Activated CD4-positive, alpha-beta T cell treated with anti-CD3 and anti-CD28 coated beads for 36 hours (primary cell): ENCODE measurements at regions of chr17 and their contacts with region 1.

Region 1: DNA sequence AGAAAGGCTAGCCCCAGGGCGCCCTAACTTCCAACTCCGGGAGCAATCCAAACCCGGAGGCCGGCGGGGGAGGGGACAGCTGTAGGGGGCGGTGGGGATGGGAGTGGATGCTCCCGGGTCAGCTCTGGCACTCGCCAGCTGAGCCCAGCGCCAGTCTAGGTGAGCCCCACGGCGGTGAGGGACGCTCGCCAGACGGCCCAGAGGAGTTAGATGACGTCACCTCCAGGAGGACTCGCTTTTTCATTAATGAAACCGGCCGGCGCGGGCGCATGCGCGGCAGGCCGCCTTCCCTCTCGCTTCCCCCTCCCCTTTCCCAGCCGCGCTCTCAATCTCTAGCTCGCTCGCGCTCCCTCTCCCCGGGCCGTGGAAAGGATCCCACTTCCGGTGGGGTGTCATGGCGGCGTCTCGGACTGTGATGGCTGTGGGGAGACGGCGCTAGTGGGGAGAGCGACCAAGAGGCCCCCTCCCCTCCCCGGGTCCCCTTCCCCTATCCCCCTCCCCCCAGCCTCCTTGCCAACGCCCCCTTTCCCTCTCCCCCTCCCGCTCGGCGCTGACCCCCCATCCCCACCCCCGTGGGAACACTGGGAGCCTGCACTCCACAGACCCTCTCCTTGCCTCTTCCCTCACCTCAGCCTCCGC is at the start of gene NF1:
- DNase-seq: peak; percentile 94
- ATAC-seq: peak; percentile 89
- H3K4me3 Mint-ChIP-seq: peak within 1 kb of the TSS; percentile 94
- H3K27ac Mint-ChIP-seq: peak within 1 kb of the TSS; percentile 94
- H3K4me1 Mint-ChIP-seq: peaks cover 11% of the 10 kb centered on the region
- H3K27me3 Mint-ChIP-seq: no peaks in the 10 kb centered on the region
- total RNA-seq, gene NF1: 22.1 to 26.2 TPM

Region 2: DNA sequence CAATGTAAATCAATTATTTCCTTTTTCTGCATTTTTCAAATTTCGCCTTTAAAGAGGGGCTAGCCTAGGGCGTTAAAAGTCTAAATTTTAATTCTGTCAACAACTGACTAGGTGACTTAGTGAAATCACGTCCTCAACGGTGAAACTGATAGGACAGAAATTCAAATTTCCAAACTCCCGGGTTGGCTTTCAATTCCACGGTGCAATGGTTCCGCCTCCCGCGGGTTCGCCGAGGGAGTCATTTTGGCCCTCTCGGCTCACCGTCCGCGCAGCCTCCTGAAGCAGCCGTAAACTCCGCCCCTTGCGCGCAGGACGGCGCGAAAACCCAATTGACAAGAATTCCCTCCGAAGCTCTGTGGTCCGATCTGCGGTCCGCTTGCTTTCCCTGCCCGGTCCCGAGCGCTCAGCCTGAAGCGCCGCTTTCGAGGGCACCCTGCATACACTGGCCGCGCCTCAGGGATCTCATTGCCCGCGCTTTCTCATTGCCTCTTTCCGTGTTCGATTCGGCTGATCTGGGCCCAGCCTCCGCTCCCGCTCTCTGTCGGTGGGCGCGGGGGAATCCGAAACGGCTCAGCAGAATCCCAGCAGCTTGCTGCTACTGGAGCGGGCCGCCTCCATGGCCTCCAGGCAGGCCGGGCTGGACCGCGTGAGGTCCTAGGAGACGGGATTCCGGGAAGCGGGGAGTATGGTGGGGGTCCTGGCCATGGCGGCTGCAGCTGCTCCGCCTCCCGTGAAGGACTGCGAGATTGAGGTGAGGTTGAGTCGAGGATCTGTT is 262.9 kb before region 1 on chr17 and contains the start of gene ATAD5:
- CTCF ChIA-PET with region 1: interaction called, 3 read pairs
- POLR2A ChIA-PET with region 1: no interaction called
- intact Hi-C with region 1: loop called in 1 of 2 experiments (anchors 1 kb)
- DNase-seq: peak; percentile 94
- ATAC-seq: peak; percentile 92
- H3K4me3 Mint-ChIP-seq: peak within 1 kb of the TSS; percentile 99
- H3K27ac Mint-ChIP-seq: peak within 1 kb of the TSS; percentile 94
- H3K4me1 Mint-ChIP-seq: peaks cover 31% of the 10 kb centered on the region
- H3K27me3 Mint-ChIP-seq: no peaks in the 10 kb centered on the region
- total RNA-seq, gene ATAD5: 33.1 to 40.8 TPM

Region 3: DNA sequence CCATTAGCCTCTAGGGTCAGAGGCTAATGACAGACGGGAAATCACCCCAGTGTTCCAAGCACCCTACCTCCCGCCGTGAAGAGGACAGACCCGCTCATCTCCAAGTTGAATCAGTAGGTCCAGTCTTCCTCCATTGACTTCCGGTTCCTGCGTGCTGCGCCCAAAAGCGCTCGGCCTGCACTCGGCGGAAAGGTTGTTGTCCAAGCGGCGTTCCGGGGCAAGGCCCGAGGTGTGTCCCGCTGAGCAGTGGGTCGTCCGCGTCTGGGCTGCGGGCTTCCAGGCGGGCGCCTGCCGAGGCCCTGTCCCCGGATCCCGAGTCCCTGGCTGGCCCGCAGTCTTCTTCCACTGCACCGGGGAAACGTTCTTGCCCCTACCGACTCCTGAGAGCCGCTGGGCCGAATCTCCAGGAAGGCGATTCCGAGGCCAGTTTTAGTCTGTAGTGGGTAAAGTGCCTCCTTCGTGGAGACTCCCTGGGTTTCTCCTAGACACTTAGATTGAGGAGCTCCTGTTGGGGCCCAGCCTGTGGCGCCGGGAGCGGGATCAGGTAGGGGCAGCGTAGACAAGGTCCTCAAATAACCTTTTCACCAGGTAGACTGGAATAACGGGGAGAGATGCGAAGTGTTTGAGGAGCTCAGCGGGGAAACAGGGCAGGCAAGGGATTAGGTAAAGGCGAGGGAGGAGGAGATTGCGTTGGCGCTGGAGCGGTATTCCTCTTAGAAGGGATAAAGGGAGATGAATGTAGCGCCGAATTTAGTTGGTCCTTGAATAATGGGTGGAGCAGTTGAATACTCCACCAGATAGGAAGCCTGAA is 188.4 kb before region 1 on chr17 and contains the start of gene TEFM:
- CTCF ChIA-PET with region 1: interaction called, 4 read pairs
- POLR2A ChIA-PET with region 1: no interaction called
- intact Hi-C with region 1: loop called in 1 of 2 experiments (anchors 1 kb)
- DNase-seq: peak; percentile 93
- ATAC-seq: peak; percentile 97
- H3K4me3 Mint-ChIP-seq: peak within 1 kb of the TSS; percentile 88
- H3K27ac Mint-ChIP-seq: peak within 1 kb of the TSS; percentile 87
- H3K4me1 Mint-ChIP-seq: peaks cover 41% of the 10 kb centered on the region
- H3K27me3 Mint-ChIP-seq: no peaks in the 10 kb centered on the region
- total RNA-seq, gene TEFM: 13.4 to 15.3 TPM

Region 4: DNA sequence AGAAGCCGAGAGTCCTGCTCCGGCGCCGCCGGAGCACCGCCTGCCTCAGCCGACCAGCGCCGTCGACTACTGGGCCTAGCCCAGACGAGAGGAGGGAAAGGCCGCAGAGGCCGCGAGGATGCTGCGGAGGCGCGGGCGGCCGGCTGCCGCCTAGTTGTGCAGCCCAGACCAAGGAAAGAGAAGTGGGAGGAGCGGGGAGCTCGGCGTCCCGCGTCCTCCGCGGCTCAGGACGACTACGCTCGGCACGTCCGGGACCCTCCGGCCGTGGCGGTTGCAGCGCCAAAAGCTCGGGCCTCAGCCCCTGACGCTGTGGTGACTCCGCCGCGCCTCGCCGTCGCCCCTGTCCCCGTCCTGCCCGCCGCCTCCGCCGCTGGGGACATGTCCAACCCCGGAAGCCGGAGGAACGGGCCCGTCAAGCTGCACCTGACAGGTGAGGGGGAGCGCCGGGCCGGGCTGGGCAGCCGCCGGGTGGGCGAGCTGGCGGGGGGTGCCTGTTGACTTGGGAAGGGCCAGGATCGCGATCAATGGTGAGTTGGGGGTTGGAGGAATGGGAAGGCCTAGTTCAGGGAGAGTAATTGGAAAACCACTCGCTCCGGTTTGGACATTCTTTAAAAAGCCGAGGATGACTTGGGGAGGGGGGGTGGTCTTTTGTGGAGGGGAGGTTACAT is 86.2 kb before region 1 on chr17:
- CTCF ChIA-PET with region 1: no interaction called
- POLR2A ChIA-PET with region 1: no interaction called
- intact Hi-C with region 1: loop called in 1 of 2 experiments (anchors 5 kb)
- DNase-seq: peak; percentile 70
- ATAC-seq: peak; percentile 71
- H3K4me3 Mint-ChIP-seq: peak overlapping the region; percentile 73
- H3K27ac Mint-ChIP-seq: peak overlapping the region; percentile 75
- H3K4me1 Mint-ChIP-seq: peaks cover 18% of the 10 kb centered on the region
- H3K27me3 Mint-ChIP-seq: peaks cover 5% of the 10 kb centered on the region

Region 5: GRCh38 chr17:31079731-31080130 is 15.0 kb before region 1 on chr17:
- CTCF ChIA-PET with region 1: no interaction called
- POLR2A ChIA-PET with region 1: no interaction called
- intact Hi-C with region 1: no loop called
- DNase-seq: no peak
- ATAC-seq: no peak
- H3K4me3 Mint-ChIP-seq: no peak overlapping the region
- H3K27ac Mint-ChIP-seq: no peak overlapping the region
- H3K4me1 Mint-ChIP-seq: no peaks in the 10 kb centered on the region
- H3K27me3 Mint-ChIP-seq: no peaks in the 10 kb centered on the region